Prostate gland (tissue), 2 donors: ENCODE measurements at regions of chr1 and their contacts with region 1.

Region 1: GRCh38 chr1:209827384-209828262 is at the start of gene UTP25:
- DNase-seq: peak; percentile 86
- H3K4me3 ChIP-seq: peak within 1 kb of the TSS; percentile 59 to 61
- H3K27ac ChIP-seq: peak within 1 kb of the TSS; percentile 61 to 73
- H3K4me1 ChIP-seq: no peaks in the 10 kb centered on the region
- H3K27me3 ChIP-seq: no peaks in the 10 kb centered on the region
- CTCF ChIP-seq: peak; percentile 41 to 88 (median 84)
- POLR2A ChIP-seq: peak; percentile 53
- total RNA-seq, gene UTP25: 6.0 to 8.1 TPM

Region 2: GRCh38 chr1:209784265-209785169 is 43.1 kb before region 1 on chr1 and contains the start of gene C1orf74:
- intact Hi-C with region 1: loop called (anchors 5 kb)
- DNase-seq: peak; percentile 98
- H3K4me3 ChIP-seq: peak within 1 kb of the TSS; percentile 44 to 56
- H3K27ac ChIP-seq: peak within 1 kb of the TSS; percentile 72 to 88
- H3K4me1 ChIP-seq: peaks cover 30% of the 10 kb centered on the region
- H3K27me3 ChIP-seq: no peaks in the 10 kb centered on the region
- CTCF ChIP-seq: peak in 2 of 4 experiments; percentile 33 to 36
- POLR2A ChIP-seq: peak; percentile 65
- total RNA-seq, gene C1orf74: 5.0 to 6.8 TPM

Region 3: DNA sequence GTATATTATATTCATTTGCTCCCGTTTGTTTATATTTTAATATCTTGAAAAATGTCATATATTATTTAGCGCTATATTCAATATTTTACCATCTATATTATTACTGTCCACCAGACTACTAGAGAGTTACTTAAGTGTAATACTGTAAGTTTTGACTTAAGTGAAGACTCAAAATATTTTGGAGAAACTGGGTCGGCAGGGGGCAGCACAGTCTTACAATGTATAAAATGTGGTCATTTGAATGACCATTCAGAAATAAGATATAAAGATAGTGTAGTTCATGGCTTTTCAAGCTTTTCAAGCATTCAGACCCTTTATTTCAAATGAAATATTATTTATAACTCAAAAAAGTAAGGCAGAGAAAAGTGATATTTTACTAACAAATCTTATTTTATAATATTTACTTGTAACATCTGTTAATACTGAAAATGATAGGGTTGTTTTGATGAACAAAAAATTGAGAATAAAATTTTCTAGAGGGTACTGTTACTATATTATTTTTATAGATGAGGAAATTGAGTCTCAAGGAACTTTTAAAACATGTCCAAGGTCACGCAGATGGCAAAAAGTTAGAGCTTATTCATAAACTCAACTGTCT is 315.9 kb after region 1 on chr1:
- intact Hi-C with region 1: no loop called
- DNase-seq: peak; percentile 53
- H3K4me3 ChIP-seq: no peak overlapping the region
- H3K27ac ChIP-seq: no peak overlapping the region
- H3K4me1 ChIP-seq: no peaks in the 10 kb centered on the region
- H3K27me3 ChIP-seq: no peaks in the 10 kb centered on the region
- CTCF ChIP-seq: peak in 3 of 4 experiments; percentile 72 to 74 (median 72)
- POLR2A ChIP-seq: no peak